ENCODE measurements at regions of chr20 and their contacts with region 1.

Region 1: GRCh38 chr20:10219452-10219791 is 792 bp downstream of the SNAP25 start:
- DNase-seq: peak; percentile 84
- H3K4me3 ChIP-seq: peak overlapping the region; percentile 68 to 69
- H3K27ac ChIP-seq: peak overlapping the region; percentile 48 to 87; a peak in 3 of 4 replicates
- H3K4me1 ChIP-seq: peaks cover 0 to 20% of the 10 kb centered on the region in 2 experiments; a peak in 2 of 4 replicates
- H3K27me3 ChIP-seq: no peaks in the 10 kb centered on the region
- CTCF ChIP-seq: peak; percentile 16; the same call in 1 of the 2 replicates
- EP300 ChIP-seq: peak in 1 of 2 experiments; percentile 49; a peak in 1 of 4 replicates
- RAD21 ChIP-seq: no peak

Region 2: GRCh38 chr20:10142625-10143024 is 76.8 kb before region 1 on chr20:
- CTCF ChIA-PET with region 1: no interaction called
- POLR2A ChIA-PET with region 1: no interaction called
- DNase-seq: no peak
- H3K4me3 ChIP-seq: no peak overlapping the region
- H3K27ac ChIP-seq: no peak overlapping the region
- H3K4me1 ChIP-seq: peaks cover 0 to 2% of the 10 kb centered on the region in 2 experiments; a peak in 1 of 4 replicates
- H3K27me3 ChIP-seq: no peaks in the 10 kb centered on the region
- CTCF ChIP-seq: no peak
- EP300 ChIP-seq: no peak
- RAD21 ChIP-seq: no peak

Region 3: DNA sequence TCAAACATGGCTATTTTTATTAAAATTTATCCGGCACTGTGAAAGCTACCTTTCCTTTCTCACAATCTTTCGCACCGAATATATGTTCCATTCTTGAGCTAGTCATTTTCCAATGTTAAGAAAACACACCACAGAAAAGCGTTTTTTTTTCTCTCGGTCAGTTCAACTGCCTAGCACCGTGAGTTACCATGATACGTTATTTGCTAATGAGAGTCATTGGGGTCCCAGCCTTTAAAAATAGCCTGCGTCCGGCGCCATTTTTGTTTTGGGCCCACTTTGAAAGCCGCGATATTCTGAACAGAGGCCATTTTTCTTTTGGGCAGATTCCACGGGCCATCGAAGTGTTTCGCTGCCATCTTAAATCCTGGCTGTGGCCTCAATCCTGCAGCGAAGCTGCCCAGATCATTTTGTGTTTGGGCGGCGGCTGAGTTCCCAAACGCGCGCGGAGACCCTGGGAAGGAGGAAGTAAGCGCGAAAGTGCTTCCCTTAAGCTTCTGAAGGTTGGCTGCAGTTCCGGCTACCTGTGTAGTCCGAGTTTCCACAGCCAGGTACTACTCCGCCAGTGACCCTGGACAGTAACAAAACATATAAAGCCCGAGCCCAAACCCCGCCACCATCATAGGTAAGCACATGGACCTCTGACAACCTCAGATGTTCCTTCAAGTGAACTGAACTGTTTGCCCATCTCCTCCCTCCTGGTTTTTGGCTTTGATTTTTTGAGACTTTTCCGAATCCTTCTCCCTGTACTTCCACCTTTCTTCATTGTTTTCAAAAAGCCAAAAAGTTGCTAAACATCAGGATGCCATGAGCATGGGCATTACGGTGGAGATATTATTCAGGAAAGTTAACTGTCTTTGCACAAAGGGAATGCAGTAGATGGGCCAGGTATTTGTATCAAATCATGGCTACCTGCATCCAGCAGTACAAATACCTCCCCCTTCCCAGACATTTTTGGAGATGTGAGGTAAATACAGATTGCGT is 215.7 kb after region 1 on chr20 and contains the start of gene SLX4IP:
- CTCF ChIA-PET with region 1: interaction called, 3 read pairs
- POLR2A ChIA-PET with region 1: interaction called, 24 read pairs
- DNase-seq: peak; percentile 75
- H3K4me3 ChIP-seq: peak within 1 kb of the TSS; percentile 93 to 99
- H3K27ac ChIP-seq: peak within 1 kb of the TSS; percentile 93 to 98
- H3K4me1 ChIP-seq: peaks cover 8 to 17% of the 10 kb centered on the region in 2 experiments; a peak in 3 of 4 replicates
- H3K27me3 ChIP-seq: no peaks in the 10 kb centered on the region
- CTCF ChIP-seq: no peak
- EP300 ChIP-seq: no peak; a peak in 1 of 4 replicates
- RAD21 ChIP-seq: no peak
- polyA plus RNA-seq, gene SLX4IP: 1.3 and 1.6 TPM in 2 replicates